GM12878 (cell line): ENCODE measurements at regions of chr10 and their contacts with region 1.

Region 1: DNA sequence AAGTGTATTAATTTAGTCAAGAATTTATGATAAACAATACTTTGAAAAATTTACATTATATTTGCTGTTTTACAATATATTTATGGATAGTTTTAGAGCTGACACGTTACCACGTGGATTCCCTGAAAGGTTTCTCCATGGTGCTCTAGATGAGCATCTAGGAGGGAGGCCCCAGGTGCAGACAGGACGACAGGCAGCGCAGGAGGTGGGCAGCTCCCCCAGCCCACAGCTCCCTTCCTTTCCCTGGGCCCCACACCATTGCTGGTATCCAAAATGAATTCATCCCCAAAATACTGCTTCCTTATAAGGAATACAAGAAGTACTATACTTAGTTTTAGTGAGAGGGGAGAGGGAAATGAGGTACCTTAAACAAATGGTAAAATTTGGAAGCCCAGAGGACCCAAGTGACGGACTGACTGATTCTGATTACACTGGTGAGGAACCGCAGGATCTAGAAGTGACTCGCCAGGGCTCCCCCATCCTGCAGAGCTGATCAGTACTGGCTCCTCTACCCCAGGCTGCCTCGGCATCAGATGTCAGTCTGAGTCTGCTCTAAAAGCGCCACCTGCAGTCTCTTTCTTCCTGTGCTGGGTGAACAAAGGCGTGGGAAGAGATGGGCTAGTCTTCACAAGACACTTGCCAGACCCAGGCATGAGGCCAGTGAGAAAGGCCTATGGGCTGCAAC is 89.2 kb downstream of the DLG5 start:
- DNase-seq: peak; percentile 68
- ATAC-seq: peak; percentile 96
- H3K4me3 ChIP-seq: no peak overlapping the region
- H3K27ac ChIP-seq: peak overlapping the region; percentile 57
- H3K4me1 ChIP-seq: peaks cover 11% of the 10 kb centered on the region
- H3K27me3 ChIP-seq: no peaks in the 10 kb centered on the region
- CTCF ChIP-seq: peak; percentile 59 to 94 (median 66); a peak in 5 of 6 replicates
- EP300 ChIP-seq: peak in 1 of 2 experiments; percentile 73; a peak in 3 of 4 replicates
- POLR2A ChIP-seq: no peak
- RAD21 ChIP-seq: peak; percentile 84

Region 2: DNA sequence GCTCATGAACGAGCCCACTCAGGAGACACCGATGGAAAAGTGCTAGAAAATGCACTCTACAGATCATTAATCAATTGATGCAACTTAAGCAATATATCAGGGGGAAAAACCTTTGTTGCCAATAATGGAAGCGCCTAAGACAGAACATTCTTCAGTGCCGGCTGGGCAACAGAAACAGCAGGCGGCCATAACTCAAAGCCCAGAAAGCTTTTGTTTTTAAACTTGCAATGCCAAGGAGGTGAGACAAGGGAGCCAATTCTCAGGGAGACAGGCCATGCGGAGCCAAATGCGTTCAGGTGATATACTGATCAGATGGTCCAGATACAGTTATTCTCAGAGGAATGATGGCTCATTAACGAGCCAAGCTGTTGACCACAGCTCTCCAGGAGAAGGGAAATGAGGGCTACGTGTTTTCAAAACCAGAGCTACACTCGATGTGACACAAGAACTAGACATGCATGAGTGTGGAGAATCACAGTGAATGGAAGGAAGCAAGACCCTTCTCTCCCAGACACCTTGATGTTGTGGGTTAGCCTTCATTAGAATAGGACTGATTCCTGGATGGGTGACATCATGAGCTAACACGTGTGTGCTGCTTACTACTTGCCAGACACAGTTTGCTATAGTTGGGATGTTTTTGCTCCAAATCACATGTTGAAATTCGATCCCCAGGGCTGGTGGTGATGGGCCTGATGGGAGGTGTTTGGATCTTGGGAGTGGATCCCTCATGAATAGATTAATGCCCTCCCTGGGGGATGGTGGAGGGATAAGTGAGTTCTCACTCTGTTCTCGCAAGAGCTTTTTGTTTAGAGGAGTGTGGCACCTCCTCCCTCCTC is 120.7 kb before region 1 on chr10:
- CTCF ChIA-PET with region 1: interaction called, 175 read pairs
- POLR2A ChIA-PET with region 1: interaction called, 5 read pairs
- RAD21 ChIA-PET with region 1: interaction called, 20 read pairs
- SMC1A ChIA-PET with region 1: interaction called, 34 read pairs
- in situ Hi-C with region 1: loop called (anchors 5 kb)
- intact Hi-C with region 1: loop called (anchors 1 kb)
- DNase-seq: no peak
- ATAC-seq: no peak
- H3K4me3 ChIP-seq: no peak overlapping the region
- H3K27ac ChIP-seq: no peak overlapping the region
- H3K4me1 ChIP-seq: 0 out of 2 replicates have a peak, but pooled peaks cover under 1% of the 10 kb centered on the region
- H3K27me3 ChIP-seq: no peaks in the 10 kb centered on the region; a peak in 1 of 4 replicates
- CTCF ChIP-seq: no peak
- EP300 ChIP-seq: no peak
- POLR2A ChIP-seq: no peak
- RAD21 ChIP-seq: no peak

Region 3: GRCh38 chr10:77774940-77775391 is 62.4 kb before region 1 on chr10:
- CTCF ChIA-PET with region 1: no interaction called
- POLR2A ChIA-PET with region 1: no interaction called
- RAD21 ChIA-PET with region 1: no interaction called
- SMC1A ChIA-PET with region 1: no interaction called
- in situ Hi-C with region 1: no loop called
- intact Hi-C with region 1: no loop called
- DNase-seq: no peak
- ATAC-seq: no peak
- H3K4me3 ChIP-seq: no peak overlapping the region
- H3K27ac ChIP-seq: no peak overlapping the region
- H3K4me1 ChIP-seq: no peaks in the 10 kb centered on the region
- H3K27me3 ChIP-seq: no peaks in the 10 kb centered on the region
- CTCF ChIP-seq: no peak
- EP300 ChIP-seq: no peak
- POLR2A ChIP-seq: no peak
- RAD21 ChIP-seq: no peak

Region 4: GRCh38 chr10:77801474-77802161 is 35.8 kb before region 1 on chr10:
- CTCF ChIA-PET with region 1: interaction called, 4 read pairs
- POLR2A ChIA-PET with region 1: no interaction called
- RAD21 ChIA-PET with region 1: no interaction called
- SMC1A ChIA-PET with region 1: interaction called, 3 read pairs
- in situ Hi-C with region 1: no loop called
- intact Hi-C with region 1: loop called (anchors 1 kb)
- DNase-seq: peak; percentile 53
- ATAC-seq: peak; percentile 95
- H3K4me3 ChIP-seq: no peak overlapping the region
- H3K27ac ChIP-seq: no peak overlapping the region
- H3K4me1 ChIP-seq: peaks cover 4% of the 10 kb centered on the region
- H3K27me3 ChIP-seq: no peaks in the 10 kb centered on the region
- CTCF ChIP-seq: no peak; a peak in 1 of 6 replicates
- EP300 ChIP-seq: peak in 1 of 2 experiments; percentile 43; a peak in 1 of 4 replicates
- POLR2A ChIP-seq: no peak
- RAD21 ChIP-seq: no peak